Posterior vena cava (tissue), 2 donors: ENCODE measurements at regions of chr15 and their contacts with region 1.

Region 1: GRCh38 chr15:91942676-91943576 is 89.4 kb downstream of the SLCO3A1 start:
- DNase-seq: peak; percentile 92

Region 2: GRCh38 chr15:91572114-91572540 is 370.8 kb before region 1 on chr15:
- intact Hi-C with region 1: no loop called
- DNase-seq: no peak

Region 3: GRCh38 chr15:91954201-91954673 is 11.3 kb after region 1 on chr15:
- intact Hi-C with region 1: loop called in 1 of 2 experiments (anchors 1 kb)
- DNase-seq: no peak